Activated T-helper 1 cell treated with anti-CD3 and anti-CD28 coated beads, Interleukin-12 subunit alpha, Interleukin-12 subunit beta, Interleukin-2, Interleukin-4 antibody, amounts not matched to agents 30 ng/mL and 10 ng/mL and 1 ng/mL, durations not matched to agents 14 hours and 24 hours and 36 hours (primary cell): ENCODE measurements at regions of chr14 and their contacts with region 1.

Region 1: GRCh38 chr14:23929822-23930294 is 23.7 kb upstream of the DHRS4 start:
- DNase-seq: peak; percentile 66
- H3K4me3 Mint-ChIP-seq: no peak overlapping the region
- H3K27ac Mint-ChIP-seq: no peak overlapping the region
- H3K4me1 Mint-ChIP-seq: no peaks in the 10 kb centered on the region
- H3K27me3 Mint-ChIP-seq: peaks cover 6% of the 10 kb centered on the region

Region 2: DNA sequence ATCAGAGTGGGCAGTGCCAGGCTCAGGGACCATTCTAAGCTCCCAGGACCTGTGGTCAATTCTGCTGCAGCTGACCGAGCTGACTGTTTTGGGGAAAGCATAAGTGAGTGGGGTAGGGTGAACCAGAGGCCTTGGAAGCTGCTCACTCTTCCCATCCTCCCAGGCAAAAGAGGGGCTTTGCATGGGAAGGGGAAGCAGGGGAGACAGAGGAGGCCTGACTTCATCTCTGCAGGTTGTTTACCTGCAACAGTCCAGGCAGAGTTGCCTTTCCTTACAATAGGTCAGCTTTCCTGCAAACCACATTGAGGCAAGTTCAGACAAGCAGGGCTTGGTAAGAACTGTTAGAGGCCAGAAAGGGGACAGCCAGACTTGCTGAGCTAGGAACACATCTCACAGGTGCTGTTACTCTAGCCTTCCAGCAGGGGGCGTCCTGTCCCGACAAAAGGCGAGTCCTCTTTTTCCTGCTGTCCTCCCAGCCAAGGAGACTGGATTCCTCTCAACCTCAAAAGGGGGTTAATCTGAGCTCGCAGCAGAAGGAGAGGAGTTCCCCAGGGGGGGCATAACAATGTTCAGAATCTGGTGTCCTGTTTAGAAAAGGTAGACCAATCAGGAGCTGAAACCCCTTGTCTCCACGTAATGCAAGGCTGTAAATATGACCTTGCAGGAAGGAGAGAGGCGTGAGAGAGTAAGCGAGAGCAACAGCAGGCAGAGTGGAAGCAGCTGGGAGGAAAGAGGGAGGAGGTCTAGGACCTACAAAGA is 298.0 kb before region 1 on chr14:
- intact Hi-C with region 1: loop called (anchors 1 kb)
- DNase-seq: peak; percentile 53
- H3K4me3 Mint-ChIP-seq: peak overlapping the region; percentile 16
- H3K27ac Mint-ChIP-seq: no peak overlapping the region
- H3K4me1 Mint-ChIP-seq: peaks cover 16% of the 10 kb centered on the region
- H3K27me3 Mint-ChIP-seq: peaks cover 2% of the 10 kb centered on the region

Region 3: GRCh38 chr14:23727566-23728335 is 202.1 kb before region 1 on chr14:
- intact Hi-C with region 1: loop called (anchors 1 kb)
- DNase-seq: no peak
- H3K4me3 Mint-ChIP-seq: no peak overlapping the region
- H3K27ac Mint-ChIP-seq: no peak overlapping the region
- H3K4me1 Mint-ChIP-seq: no peaks in the 10 kb centered on the region
- H3K27me3 Mint-ChIP-seq: peaks cover 2% of the 10 kb centered on the region

Region 4: DNA sequence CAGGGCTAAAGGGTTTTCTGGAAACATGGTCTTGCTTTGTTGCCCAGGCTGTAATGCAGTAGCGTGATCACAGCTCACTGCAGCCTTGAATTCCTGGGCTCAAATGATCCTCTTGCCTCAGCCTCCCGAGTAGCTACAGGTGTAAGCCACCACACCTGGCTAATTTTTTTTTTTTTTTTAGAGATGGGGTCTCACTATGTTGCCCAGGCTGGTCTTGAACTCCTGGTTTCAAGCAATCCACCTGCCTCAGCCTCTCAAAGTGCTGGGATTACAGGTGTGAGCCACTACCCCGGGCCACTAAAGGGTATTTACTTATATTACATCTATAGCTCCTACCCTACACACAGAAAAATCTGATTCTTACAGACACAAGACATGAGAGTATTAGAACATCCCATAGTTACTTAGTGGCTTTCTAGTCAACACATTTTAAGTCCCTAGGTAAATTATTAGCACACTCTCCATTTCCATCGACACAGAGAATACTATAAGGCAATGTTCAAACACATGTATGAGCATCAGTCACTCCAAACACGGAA is 178.5 kb after region 1 on chr14:
- intact Hi-C with region 1: no loop called
- DNase-seq: no peak
- H3K4me3 Mint-ChIP-seq: peak overlapping the region; percentile 24
- H3K27ac Mint-ChIP-seq: peak overlapping the region; percentile 95
- H3K4me1 Mint-ChIP-seq: peaks cover 34% of the 10 kb centered on the region
- H3K27me3 Mint-ChIP-seq: no peaks in the 10 kb centered on the region